Dorsolateral prefrontal cortex (tissue), 120 donors: ENCODE measurements at regions of chr2 and their contacts with region 1.

Region 1: DNA sequence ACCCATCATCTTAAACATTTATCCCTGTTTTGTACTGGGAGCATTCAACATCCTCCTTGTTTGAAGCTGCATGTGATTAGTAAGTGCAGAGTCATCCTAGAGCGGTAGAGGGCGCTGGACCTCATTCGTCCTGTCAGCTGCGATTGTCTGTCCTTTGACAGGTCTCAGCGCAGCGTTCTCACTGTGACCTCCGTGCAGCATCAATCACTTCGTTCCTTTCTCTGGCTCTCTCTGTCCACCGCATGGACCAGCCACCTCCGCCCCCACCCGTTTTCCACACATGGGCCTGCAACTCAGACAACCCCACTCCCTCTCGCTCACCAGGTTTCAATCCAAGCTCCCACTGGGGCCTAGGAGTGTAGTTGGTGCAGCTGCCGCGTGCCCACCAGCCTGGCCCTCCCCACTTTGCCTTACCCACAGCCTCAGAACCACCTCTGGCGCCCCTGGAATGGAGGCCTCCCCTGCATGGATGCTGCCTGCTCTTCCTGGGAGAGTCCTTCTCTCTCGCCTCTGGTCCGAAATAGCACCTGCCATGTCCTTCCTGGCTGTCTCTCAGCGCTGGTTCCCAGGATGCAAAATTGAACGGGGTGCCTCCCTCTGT is 90.5 kb downstream of the NDUFA10 start:
- DNase-seq: peak; percentile 69 to 92 (median 79)
- H3K4me3 ChIP-seq: peak overlapping the region in 2 of 59 donors; percentile 20 to 21
- H3K27ac ChIP-seq: peak overlapping the region in 9 of 59 donors; percentile 22 to 76 (median 54)
- H3K27me3 ChIP-seq: no peaks in the 10 kb centered on the region
- CTCF ChIP-seq: peak; percentile 48 to 95 (median 85)

Region 2: DNA sequence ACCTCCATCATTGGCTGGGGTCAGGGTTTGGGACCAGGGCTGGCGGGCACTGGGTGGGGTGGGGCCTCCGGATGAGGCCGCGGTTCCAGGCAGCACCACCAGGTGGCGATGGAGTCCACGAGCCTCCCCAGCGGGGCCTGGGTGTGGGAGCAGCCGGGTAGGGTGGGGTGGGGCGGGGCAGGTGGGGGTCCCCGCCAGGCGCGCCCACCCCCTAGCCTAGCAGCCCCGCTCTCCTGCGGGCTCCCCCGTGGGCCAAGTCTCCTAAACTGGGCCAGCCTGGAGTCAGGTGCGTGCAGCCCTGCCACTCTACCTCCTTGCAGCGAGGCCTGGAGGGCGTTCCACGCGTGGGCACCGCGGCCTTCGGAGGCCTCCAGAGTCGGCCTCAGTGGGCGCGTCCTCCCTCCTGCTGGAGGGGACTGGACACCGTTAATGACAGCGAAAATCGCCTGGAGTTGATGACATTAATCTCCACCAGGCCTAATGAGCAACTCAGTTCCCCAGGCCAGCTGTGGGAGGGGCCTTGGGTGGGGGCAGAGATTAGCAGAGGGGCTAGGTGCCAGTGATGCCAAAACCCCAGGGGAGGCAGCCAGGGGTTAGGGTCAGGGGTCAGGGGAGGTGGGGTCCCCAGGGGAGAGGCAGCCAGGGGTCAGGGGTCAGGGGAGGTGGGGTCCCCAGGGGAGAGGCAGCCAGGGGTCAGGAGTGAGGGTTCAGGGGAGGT is 899.2 kb before region 1 on chr2:
- intact Hi-C with region 1: loop called in 1 of 2 experiments (anchors 10 kb)
- DNase-seq: peak; percentile 47 to 82 (median 64)
- H3K4me3 ChIP-seq: peak overlapping the region in 2 of 59 donors; percentile 18
- H3K27ac ChIP-seq: peak overlapping the region in 3 of 59 donors; percentile 44 to 57 (median 46)
- H3K27me3 ChIP-seq: no peaks in the 10 kb centered on the region
- CTCF ChIP-seq: peak; percentile 61 to 99 (median 93)

Region 3: GRCh38 chr2:239143858-239144718 is 790.6 kb before region 1 on chr2:
- intact Hi-C with region 1: loop called in 1 of 2 experiments (anchors 10 kb)
- DNase-seq: peak in 2 of 10 donors; percentile 34 to 36
- H3K4me3 ChIP-seq: no peak overlapping the region
- H3K27ac ChIP-seq: peak overlapping the region in 43 of 59 donors; percentile 4 to 75 (median 51)
- H3K27me3 ChIP-seq: no peaks in the 10 kb centered on the region
- CTCF ChIP-seq: peak in 55 of 56 donors; percentile 26 to 82 (median 73)

Region 4: DNA sequence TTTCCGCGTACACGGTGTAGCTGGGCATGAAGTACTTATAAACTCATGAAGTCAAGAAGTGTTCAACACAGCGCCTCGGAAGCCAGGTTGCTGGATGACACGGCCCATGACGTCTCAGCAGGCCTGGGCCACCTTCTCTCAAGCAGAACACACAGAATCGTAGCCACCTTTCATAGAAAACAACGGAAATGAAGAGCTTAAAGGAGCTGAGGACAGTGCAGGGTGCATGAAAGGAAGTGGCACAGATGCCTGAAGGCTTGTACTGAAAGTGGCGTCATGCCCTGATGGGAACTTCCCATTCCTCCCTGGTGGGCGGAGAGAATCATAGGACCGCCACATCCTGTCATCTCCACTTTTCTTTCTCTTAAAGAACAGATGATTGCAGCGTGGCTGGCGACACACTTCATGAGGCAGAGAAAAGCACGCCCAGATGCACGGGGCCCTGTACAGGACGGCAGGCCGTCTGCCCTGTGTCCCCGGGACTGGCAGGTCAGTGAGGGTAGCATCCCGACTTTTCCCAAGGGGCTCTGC is 565.0 kb before region 1 on chr2:
- intact Hi-C with region 1: loop called in 1 of 2 experiments (anchors 10 kb)
- DNase-seq: peak in 5 of 10 donors; percentile 20 to 69 (median 58)
- H3K4me3 ChIP-seq: peak overlapping the region in 2 of 59 donors; percentile 5 to 7
- H3K27ac ChIP-seq: peak overlapping the region in 30 of 59 donors; percentile 3 to 64 (median 38)
- H3K27me3 ChIP-seq: no peaks in the 10 kb centered on the region
- CTCF ChIP-seq: no peak

Region 5: GRCh38 chr2:239735131-239735828 is 199.4 kb before region 1 on chr2:
- intact Hi-C with region 1: loop called in 1 of 2 experiments (anchors 5 kb)
- DNase-seq: peak in 9 of 10 donors; percentile 72 to 89 (median 80)
- H3K4me3 ChIP-seq: peak overlapping the region in 30 of 59 donors; percentile 2 to 55 (median 26)
- H3K27ac ChIP-seq: peak overlapping the region in 22 of 59 donors; percentile 2 to 82 (median 42)
- H3K27me3 ChIP-seq: no peaks in the 10 kb centered on the region
- CTCF ChIP-seq: peak in 46 of 56 donors; percentile 8 to 67 (median 44)

Region 6: GRCh38 chr2:239869383-239870155 is 65.1 kb before region 1 on chr2:
- intact Hi-C with region 1: no loop called
- DNase-seq: no peak
- H3K4me3 ChIP-seq: no peak overlapping the region
- H3K27ac ChIP-seq: no peak overlapping the region
- H3K27me3 ChIP-seq: no peaks in the 10 kb centered on the region
- CTCF ChIP-seq: no peak

Region 7: GRCh38 chr2:239979243-239980023 is 44.8 kb after region 1 on chr2:
- intact Hi-C with region 1: loop called in 1 of 2 experiments (anchors 5 kb)
- DNase-seq: peak in 5 of 10 donors; percentile 54 to 74 (median 67)
- H3K4me3 ChIP-seq: no peak overlapping the region
- H3K27ac ChIP-seq: peak overlapping the region in 8 of 59 donors; percentile 1 to 51 (median 29)
- H3K27me3 ChIP-seq: no peaks in the 10 kb centered on the region
- CTCF ChIP-seq: peak in 49 of 56 donors; percentile 8 to 74 (median 51)

Region 8: GRCh38 chr2:239985356-239985755 is 50.7 kb after region 1 on chr2:
- intact Hi-C with region 1: loop called in 1 of 2 experiments (anchors 5 kb)
- DNase-seq: no peak
- H3K4me3 ChIP-seq: no peak overlapping the region
- H3K27ac ChIP-seq: no peak overlapping the region
- H3K27me3 ChIP-seq: no peaks in the 10 kb centered on the region
- CTCF ChIP-seq: no peak

Region 9: GRCh38 chr2:240160291-240161086 is 225.8 kb after region 1 on chr2:
- intact Hi-C with region 1: no loop called
- DNase-seq: peak in 1 of 10 donors; percentile 42
- H3K4me3 ChIP-seq: no peak overlapping the region
- H3K27ac ChIP-seq: no peak overlapping the region
- H3K27me3 ChIP-seq: no peaks in the 10 kb centered on the region
- CTCF ChIP-seq: no peak